Ascending aorta (tissue), 2 donors: ENCODE measurements at regions of chr7 and their contacts with region 1.

Region 1: DNA sequence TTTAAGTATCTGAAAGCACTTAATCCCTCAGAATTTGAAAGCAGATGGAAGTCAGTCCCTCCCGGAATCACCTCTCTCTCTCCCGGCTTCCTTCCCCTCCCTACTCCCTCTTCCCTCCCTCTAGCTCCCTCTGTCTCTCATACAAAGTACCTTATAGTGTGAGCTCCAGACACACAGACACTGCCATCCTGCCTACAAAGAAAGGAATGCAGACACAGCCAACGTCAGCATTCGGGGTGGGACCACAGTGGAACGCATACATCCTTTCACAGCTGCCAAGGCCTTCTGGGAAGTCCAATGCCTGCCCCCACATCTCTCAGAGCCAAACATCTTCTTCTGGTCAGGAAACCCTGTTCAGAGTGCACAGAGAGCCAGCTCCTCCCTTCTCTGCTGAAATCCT is 9.3 kb downstream of the NOD1 start:
- DNase-seq: peak in 1 of 2 donors; percentile 92
- H3K4me3 ChIP-seq: peak overlapping the region in 1 of 2 donors; percentile 12
- H3K27ac ChIP-seq: peak overlapping the region; percentile 53 to 82
- H3K4me1 ChIP-seq: peaks cover 14 to 50% of the 10 kb centered on the region in 2 donors
- H3K27me3 ChIP-seq: no peaks in the 10 kb centered on the region
- CTCF ChIP-seq: peak in 1 of 3 experiments; percentile 49

Region 2: DNA sequence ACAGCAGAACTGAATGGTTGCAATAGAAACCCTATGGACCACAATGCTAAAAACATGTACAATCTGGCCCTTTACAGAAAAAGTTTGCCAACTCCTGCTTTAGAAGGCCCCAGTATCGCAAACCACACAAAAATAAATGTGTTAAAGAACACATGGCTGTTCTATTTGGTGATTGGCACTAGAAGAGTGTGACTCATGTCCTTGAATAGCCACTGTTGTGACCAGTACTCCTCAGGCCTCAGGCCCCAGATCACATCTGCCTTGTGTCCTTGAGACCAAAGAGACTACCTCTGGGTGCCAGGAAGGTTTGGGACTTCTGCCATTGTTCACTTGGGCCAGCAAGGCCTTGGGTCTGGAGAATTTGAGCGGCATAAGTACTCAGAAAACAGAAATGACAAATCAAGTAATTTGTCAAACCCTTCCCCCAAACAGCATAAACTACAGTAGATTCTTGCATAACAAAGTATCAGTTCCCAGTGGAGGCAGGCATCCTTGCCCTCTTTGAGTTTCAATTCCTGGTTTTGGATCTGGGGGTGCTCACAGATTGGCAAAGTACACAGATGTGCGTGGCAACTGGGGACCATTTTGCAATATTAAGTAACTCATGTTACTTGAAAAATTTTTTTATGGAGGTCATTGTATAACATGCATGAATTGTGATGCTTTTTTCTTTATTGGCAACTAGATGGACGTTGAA is 284.4 kb before region 1 on chr7:
- intact Hi-C with region 1: loop called (anchors 5 kb)
- DNase-seq: peak; percentile 54 to 85
- H3K4me3 ChIP-seq: no peak overlapping the region
- H3K27ac ChIP-seq: peak overlapping the region; percentile 54 to 79
- H3K4me1 ChIP-seq: peaks cover 2 to 36% of the 10 kb centered on the region in 2 donors
- H3K27me3 ChIP-seq: no peaks in the 10 kb centered on the region
- CTCF ChIP-seq: no peak

Region 3: GRCh38 chr7:30504347-30505173 is 35.3 kb after region 1 on chr7 and contains the start of gene GGCT:
- intact Hi-C with region 1: loop called (anchors 2 kb)
- DNase-seq: peak; percentile 99 to 100
- H3K4me3 ChIP-seq: peak within 1 kb of the TSS; percentile 88 to 95
- H3K27ac ChIP-seq: peak within 1 kb of the TSS; percentile 88 to 93
- H3K4me1 ChIP-seq: peaks cover 2 to 6% of the 10 kb centered on the region in 2 donors
- H3K27me3 ChIP-seq: no peaks in the 10 kb centered on the region
- CTCF ChIP-seq: no peak
- total RNA-seq, gene GGCT: 0.43 TPM

Region 4: GRCh38 chr7:30931161-30931928 is 462.0 kb after region 1 on chr7:
- intact Hi-C with region 1: no loop called
- DNase-seq: peak in 1 of 2 donors; percentile 53
- H3K4me3 ChIP-seq: no peak overlapping the region
- H3K27ac ChIP-seq: no peak overlapping the region
- H3K4me1 ChIP-seq: no peaks in the 10 kb centered on the region
- H3K27me3 ChIP-seq: no peaks in the 10 kb centered on the region
- CTCF ChIP-seq: no peak